ENCODE measurements at regions of chr5 and their contacts with region 1.

Region 1: DNA sequence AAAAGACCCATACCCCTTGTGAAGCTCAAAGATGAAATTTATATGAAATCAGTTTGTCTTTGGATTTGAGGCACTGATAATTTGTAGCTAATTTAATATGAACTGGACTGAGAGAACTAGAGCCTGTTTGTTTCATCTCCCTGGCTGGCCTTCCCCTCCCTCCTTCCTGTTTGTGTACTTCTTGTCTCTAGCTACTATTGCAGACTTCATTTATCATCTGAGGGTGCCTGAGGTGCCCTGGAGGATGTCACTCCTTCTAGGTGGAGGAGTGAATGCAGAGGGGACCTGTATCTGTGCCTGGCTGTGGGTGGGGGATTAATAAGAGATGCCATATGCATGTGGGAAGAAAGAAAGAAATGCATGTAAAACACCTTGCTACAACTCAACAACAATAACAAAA is 22.2 kb upstream of the GNPDA1 start:
- DNase-seq: no peak
- H3K4me3 Mint-ChIP-seq: no peak overlapping the region
- H3K27ac Mint-ChIP-seq: no peak overlapping the region
- H3K4me1 Mint-ChIP-seq: peaks cover 19% of the 10 kb centered on the region
- H3K27me3 Mint-ChIP-seq: no peaks in the 10 kb centered on the region

Region 2: DNA sequence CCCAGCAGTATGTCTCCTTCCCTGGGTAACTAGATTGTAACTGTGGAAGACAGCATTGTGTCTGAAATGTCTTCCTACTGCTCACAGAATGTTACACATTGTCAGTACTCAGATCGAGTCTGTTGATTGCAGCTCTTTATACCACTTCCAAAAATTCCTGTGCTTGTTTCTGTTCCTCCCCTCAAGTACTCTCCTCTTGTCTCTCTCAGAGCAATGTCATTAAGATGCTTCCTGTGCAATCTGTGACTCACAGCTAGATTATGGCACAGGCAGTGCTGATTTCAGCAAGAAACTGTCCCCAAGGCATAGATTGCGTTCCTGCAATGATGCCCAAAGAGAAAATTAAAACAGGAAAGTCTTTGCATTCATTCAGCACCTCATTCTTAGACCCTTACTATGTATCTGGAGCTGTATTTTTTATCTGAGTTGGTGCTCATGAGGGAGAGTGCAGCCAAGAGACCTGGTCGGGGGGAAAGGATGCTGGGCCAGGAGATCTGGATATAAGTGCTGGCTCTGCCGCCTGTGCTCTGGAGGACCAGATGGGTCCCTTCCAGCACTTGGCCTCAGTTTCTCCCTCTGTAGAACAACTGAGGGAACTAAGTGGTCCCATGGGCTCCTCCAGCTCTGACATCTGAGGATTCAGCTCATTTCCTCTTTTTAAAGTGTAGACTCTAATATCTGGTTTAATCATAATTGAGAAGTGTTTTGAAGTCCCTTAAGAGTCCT is 18.6 kb after region 1 on chr5:
- CTCF ChIA-PET with region 1: interaction called, 3 read pairs
- intact Hi-C with region 1: loop called (anchors 2 kb)
- DNase-seq: peak; percentile 50
- H3K4me3 Mint-ChIP-seq: peak overlapping the region; percentile 10
- H3K27ac Mint-ChIP-seq: no peak overlapping the region
- H3K4me1 Mint-ChIP-seq: peaks cover 32% of the 10 kb centered on the region
- H3K27me3 Mint-ChIP-seq: no peaks in the 10 kb centered on the region

Measured in activated naive CD4-positive, alpha-beta T cell treated with anti-CD3 and anti-CD28 coated beads for 36 hours (primary cell).